Activated B cell treated with CpG ODN at 0.5 μM for 24 hours (primary cell): ENCODE measurements at regions of chr1 and their contacts with region 1.

Region 1: DNA sequence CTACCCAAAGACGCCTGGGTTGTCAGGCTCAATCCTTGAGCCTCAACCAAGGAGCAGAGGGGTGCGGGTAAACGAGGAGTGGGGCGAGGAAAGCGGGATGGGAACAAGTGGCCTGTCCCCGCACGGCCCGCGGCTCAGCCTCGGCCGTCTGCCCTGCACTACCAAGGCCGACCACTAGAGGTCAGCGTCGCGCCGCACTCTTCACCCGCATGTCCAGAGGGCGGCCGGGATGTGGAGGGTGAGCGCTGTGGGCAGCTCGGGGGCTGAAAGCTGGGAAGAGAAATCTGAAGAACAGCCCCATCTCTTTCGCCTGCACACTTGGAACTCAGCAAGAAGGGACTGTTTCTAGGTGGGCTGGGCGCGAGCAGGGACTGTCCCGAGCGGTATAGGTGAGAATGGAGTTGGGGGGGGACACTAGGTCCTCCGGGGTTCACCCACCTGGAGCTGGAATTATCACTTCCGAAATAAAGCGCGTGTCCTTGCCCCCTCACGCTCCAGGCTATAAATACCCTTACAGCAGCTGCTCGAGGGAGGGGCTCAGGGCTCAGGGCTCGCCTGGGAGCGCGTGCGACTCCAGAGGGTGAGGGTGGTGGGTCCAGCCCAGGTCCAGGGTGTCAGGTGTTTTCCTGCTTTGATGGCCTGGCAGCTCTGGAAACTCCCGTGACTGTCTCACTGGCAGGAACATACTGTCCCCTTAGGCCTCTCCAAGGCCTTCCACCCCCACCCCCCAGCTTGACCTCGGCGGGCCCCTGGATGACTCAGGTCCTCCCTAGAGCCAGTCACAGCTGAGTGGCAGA is 9.8 kb downstream of the SLC30A2 start:
- DNase-seq: peak; percentile 84
- ATAC-seq: peak; percentile 73
- H3K4me3 Mint-ChIP-seq: peak overlapping the region; percentile 96
- H3K27ac Mint-ChIP-seq: peak overlapping the region; percentile 78
- H3K4me1 Mint-ChIP-seq: peaks cover 11% of the 10 kb centered on the region
- H3K27me3 Mint-ChIP-seq: peaks cover 6% of the 10 kb centered on the region
- CTCF ChIP-seq: peak; percentile 98

Region 2: GRCh38 chr1:25895365-25895993 is 140.7 kb before region 1 on chr1:
- CTCF ChIA-PET with region 1: interaction called, 9 read pairs
- POLR2A ChIA-PET with region 1: no interaction called
- intact Hi-C with region 1: loop called (anchors 1 kb)
- DNase-seq: peak; percentile 80
- ATAC-seq: peak; percentile 100
- H3K4me3 Mint-ChIP-seq: peak overlapping the region; percentile 3
- H3K27ac Mint-ChIP-seq: peak overlapping the region; percentile 22
- H3K4me1 Mint-ChIP-seq: peaks cover 7% of the 10 kb centered on the region
- H3K27me3 Mint-ChIP-seq: no peaks in the 10 kb centered on the region
- CTCF ChIP-seq: peak; percentile 74

Region 3: GRCh38 chr1:26102526-26102925 is 66.4 kb after region 1 on chr1:
- CTCF ChIA-PET with region 1: no interaction called
- POLR2A ChIA-PET with region 1: no interaction called
- intact Hi-C with region 1: loop called (anchors 1 kb)
- DNase-seq: no peak
- ATAC-seq: no peak
- H3K4me3 Mint-ChIP-seq: no peak overlapping the region
- H3K27ac Mint-ChIP-seq: no peak overlapping the region
- H3K4me1 Mint-ChIP-seq: peaks cover 4% of the 10 kb centered on the region
- H3K27me3 Mint-ChIP-seq: peaks cover 14% of the 10 kb centered on the region
- CTCF ChIP-seq: no peak

Region 4: DNA sequence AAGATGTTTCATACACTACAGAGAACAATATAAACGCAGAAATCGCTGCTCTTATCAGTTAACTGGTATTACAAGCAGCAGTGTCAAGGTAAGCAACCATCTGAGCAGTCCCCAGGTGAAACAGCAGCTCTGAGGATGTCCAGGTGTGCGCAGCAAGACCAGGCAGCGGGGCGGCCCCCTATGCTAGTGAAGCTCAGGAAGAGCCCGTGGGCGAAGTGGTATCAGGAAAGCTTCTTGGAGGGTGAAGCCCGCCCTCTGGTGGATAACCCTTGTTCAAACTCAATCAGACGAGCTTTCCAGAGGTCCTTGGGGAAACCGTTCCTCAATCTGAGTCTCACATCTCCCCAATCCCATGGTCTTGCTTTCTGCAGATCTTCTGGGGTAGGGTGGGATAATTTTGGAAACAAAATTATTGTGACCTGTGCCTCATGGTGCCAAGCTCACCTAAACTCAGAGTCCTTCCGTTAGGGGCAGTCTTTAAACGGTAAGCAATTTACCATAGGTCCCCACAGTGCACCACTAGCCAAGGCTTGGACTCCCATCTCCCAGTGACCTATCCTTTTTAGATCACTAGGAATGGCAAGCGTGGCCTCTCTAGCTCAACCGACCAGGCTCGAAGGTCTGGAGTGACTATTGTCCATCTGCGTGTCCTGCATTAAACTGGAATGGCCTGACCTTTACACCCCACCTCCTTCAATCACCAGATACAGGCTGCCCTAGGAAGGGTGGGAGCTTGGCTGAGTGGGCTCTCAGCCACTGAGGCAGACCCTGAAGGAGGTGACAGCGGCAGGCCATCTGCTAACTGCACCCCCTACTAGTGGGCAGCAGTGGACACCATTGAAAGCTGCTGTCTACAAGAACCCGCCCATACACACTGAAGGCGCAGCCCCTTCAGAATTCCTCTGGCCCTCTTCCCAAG is 109.1 kb after region 1 on chr1:
- CTCF ChIA-PET with region 1: interaction called, 9 read pairs
- POLR2A ChIA-PET with region 1: no interaction called
- intact Hi-C with region 1: loop called (anchors 1 kb)
- DNase-seq: no peak
- ATAC-seq: peak; percentile 69
- H3K4me3 Mint-ChIP-seq: no peak overlapping the region
- H3K27ac Mint-ChIP-seq: no peak overlapping the region
- H3K4me1 Mint-ChIP-seq: peaks cover 3% of the 10 kb centered on the region
- H3K27me3 Mint-ChIP-seq: peaks cover 15% of the 10 kb centered on the region
- CTCF ChIP-seq: peak; percentile 50

Region 5: DNA sequence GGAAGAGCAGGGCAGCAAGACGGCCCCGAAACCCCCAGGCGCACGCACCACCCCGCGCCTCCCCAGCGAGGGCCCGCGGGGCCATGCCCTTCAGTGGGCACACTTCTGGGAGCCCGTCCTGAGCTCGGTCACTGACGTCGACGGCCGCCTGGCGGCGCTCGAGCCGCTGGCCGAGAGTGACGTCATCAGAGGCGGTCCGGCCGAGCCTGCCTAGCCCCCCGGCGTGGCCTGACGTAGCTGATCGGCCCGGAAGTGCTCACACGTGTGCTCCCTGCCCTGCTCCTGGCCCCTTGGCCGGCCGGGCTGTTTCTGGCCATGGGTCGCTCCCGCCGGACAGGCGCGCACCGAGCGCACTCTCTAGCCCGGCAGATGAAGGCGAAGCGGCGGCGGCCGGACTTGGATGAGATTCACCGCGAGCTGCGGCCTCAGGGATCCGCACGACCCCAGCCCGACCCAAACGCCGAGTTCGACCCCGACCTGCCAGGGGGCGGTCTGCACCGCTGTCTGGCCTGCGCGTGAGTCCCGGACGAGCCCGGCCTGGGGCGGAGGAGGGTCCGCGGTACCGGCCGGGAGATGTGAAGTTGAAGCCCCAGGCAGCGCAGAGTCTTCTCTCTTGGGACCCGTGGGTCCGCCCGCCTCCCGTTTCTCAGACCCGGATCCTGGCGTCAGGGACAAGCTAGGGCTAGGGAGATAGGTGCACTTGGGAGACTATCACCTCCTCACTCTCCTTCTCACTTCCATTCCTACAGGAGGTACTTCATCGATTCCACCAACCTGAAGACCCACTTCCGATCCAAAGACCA is 133.7 kb after region 1 on chr1 and contains the start of gene ZNF593:
- CTCF ChIA-PET with region 1: no interaction called
- POLR2A ChIA-PET with region 1: no interaction called
- intact Hi-C with region 1: no loop called
- DNase-seq: peak; percentile 90
- ATAC-seq: peak; percentile 94
- H3K4me3 Mint-ChIP-seq: peak within 1 kb of the TSS; percentile 91
- H3K27ac Mint-ChIP-seq: peak within 1 kb of the TSS; percentile 84
- H3K4me1 Mint-ChIP-seq: peaks cover 16% of the 10 kb centered on the region
- H3K27me3 Mint-ChIP-seq: no peaks in the 10 kb centered on the region
- CTCF ChIP-seq: no peak
- total RNA-seq, gene ZNF593: 36.0 and 37.1 TPM in 2 replicates

Region 6: DNA sequence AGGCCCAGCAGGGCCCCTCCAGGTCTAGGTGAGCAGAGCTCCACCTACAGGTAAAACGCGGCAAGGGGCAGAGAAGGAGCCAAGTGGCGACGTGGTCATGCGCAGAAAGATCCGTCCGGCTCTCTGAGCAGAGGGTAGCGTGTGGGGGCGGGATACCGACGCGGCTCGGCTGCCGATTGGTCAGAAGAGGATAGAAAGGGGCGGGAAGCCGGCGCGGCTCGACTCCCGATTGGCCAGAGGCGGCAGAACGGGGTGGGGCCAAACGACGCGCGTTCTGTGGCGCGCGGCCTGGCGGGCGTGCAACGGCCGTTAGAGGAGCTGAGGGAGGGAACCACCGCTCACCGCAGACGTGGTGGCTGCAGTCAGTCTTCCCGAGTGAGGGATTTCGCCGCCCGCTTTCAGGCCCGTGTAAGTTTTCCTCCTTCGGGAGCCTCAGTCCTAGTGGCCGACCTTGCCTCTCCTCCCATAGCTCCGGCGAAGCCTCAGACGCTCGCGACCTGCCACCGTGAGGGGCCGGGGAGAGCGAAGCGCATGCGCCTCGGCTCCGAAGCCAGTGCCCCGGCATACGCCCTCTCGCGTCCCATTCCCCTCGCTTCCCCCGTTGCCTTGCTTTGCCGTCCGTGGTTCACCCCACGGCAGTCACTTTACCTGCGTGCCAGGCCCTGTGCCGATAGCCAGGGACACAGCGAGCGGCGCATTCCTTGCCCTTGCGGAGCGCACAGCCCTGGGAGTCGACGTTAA is 197.9 kb after region 1 on chr1 and contains the start of gene CEP85:
- CTCF ChIA-PET with region 1: no interaction called
- POLR2A ChIA-PET with region 1: interaction called, 4 read pairs
- intact Hi-C with region 1: loop called (anchors 2 kb)
- DNase-seq: peak; percentile 94
- ATAC-seq: peak; percentile 88
- H3K4me3 Mint-ChIP-seq: peak within 1 kb of the TSS; percentile 98
- H3K27ac Mint-ChIP-seq: peak within 1 kb of the TSS; percentile 94
- H3K4me1 Mint-ChIP-seq: peaks cover 34% of the 10 kb centered on the region
- H3K27me3 Mint-ChIP-seq: no peaks in the 10 kb centered on the region
- CTCF ChIP-seq: no peak
- total RNA-seq, gene CEP85: 13.8 and 16.4 TPM in 2 replicates